IMR-90 (cell line): ENCODE measurements at regions of chr17 and their contacts with region 1.

Region 1: DNA sequence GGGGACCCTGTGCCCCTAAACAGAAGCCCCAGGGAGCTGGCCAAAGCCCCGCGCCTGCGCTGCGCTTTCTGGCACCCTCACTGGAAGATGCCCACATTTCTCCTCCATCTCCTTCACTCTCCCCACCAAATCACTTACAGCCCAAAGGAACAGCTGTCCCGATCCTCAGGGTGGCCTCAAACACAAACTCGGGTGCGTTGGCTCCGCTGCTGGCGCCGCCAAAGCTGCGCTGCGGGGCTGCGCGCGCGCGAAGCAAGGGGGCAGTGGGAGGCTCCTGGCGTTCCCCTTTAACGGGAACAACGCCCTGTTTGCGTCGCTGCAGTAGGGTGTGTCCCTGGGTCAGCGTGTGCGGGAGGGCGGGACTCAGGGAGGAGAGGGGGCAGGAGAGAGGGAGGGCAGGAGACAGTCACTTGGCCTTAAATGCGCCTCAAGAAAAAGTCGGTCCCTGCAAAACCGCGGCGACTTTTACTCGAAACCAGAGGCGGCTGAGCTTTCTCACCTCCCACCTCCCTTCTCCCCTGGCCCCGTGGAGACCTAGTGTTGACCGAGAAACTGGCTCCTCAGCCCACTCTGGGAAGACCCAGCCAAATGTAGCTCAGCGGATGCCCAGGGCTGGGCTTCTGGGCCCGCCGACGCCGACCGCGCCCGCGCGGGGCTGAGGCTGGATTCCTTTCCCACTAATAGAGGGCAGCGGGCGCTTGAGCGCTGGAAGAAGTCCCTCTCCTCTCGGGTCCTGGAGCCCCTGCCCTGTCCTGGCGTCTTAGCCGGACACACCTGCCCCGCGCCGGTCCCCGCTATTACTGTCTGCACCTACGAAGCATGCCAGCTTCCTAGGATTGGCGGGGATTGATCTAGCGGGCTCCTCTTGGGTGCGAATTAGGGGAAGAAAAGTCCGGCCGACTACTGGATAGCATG is 2.6 kb downstream of the PMP22 start:
- DNase-seq: peak; percentile 83
- ATAC-seq: peak; percentile 77
- H3K4me3 ChIP-seq: peak overlapping the region; percentile 76
- H3K27ac ChIP-seq: peak overlapping the region; percentile 88
- H3K4me1 ChIP-seq: peaks cover 5% of the 10 kb centered on the region
- H3K27me3 ChIP-seq: peaks cover 29% of the 10 kb centered on the region
- CTCF ChIP-seq: peak; percentile 32; the same call in 1 of the 2 replicates
- POLR2A ChIP-seq: peak; percentile 74
- RAD21 ChIP-seq: no peak

Region 2: DNA sequence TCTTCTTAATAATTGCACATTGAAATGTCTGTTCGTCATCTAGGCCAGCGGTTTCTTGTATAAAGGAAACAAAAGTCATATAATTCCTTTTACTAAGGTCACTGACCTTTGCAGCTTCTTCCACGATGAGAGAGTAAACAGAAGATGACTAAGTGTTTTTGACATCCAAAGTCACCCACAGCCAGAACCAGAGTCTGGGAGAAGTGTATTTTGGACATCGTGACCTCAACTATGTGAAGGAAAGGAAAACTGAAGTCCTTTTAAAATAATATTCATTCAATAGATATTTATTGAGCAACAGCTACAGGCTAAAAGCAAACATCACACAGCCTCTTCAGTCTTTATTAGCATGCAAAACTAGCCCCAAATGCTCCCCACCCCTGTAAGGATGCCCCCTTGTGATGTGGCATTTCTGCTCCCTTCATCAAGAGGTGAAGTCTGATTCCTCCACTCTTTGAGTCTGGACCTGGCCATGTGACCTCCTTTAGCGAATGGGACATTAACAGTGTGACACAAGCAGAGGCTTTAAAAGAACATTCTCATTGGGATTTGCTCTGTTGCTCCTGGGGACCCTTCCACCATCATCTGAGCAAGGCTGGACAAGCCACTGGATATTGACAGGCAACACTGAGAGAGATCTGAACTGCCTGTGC is 10.7 kb after region 1 on chr17:
- CTCF ChIA-PET with region 1: interaction called, 7 read pairs
- POLR2A ChIA-PET with region 1: no interaction called
- dilution Hi-C with region 1: no loop called
- in situ Hi-C with region 1: no loop called
- intact Hi-C with region 1: loop called (anchors 1 kb)
- DNase-seq: peak; percentile 98
- ATAC-seq: peak; percentile 90
- H3K4me3 ChIP-seq: no peak overlapping the region
- H3K27ac ChIP-seq: peak overlapping the region; percentile 85
- H3K4me1 ChIP-seq: peaks cover 27% of the 10 kb centered on the region
- H3K27me3 ChIP-seq: peaks cover 16% of the 10 kb centered on the region
- CTCF ChIP-seq: no peak
- POLR2A ChIP-seq: no peak
- RAD21 ChIP-seq: peak; percentile 12; the same call in 1 of the 2 replicates

Region 3: GRCh38 chr17:15307710-15308111 is 45.2 kb after region 1 on chr17:
- CTCF ChIA-PET with region 1: no interaction called
- POLR2A ChIA-PET with region 1: no interaction called
- dilution Hi-C with region 1: no loop called
- in situ Hi-C with region 1: no loop called
- intact Hi-C with region 1: loop called (anchors 1 kb)
- DNase-seq: peak; percentile 89
- ATAC-seq: peak; percentile 79
- H3K4me3 ChIP-seq: no peak overlapping the region
- H3K27ac ChIP-seq: peak overlapping the region; percentile 20; the same call in 1 of the 2 replicates
- H3K4me1 ChIP-seq: peaks cover 20% of the 10 kb centered on the region
- H3K27me3 ChIP-seq: peaks cover 8% of the 10 kb centered on the region
- CTCF ChIP-seq: no peak
- POLR2A ChIP-seq: no peak
- RAD21 ChIP-seq: no peak

Region 4: GRCh38 chr17:15377616-15378015 is 115.1 kb after region 1 on chr17:
- CTCF ChIA-PET with region 1: interaction called, 4 read pairs
- POLR2A ChIA-PET with region 1: interaction called, 3 read pairs
- dilution Hi-C with region 1: no loop called
- in situ Hi-C with region 1: no loop called
- intact Hi-C with region 1: loop called (anchors 2 kb)
- DNase-seq: peak; percentile 54
- ATAC-seq: peak; percentile 79
- H3K4me3 ChIP-seq: no peak overlapping the region
- H3K27ac ChIP-seq: peak overlapping the region; percentile 19; the same call in 1 of the 2 replicates
- H3K4me1 ChIP-seq: peaks cover 5% of the 10 kb centered on the region
- H3K27me3 ChIP-seq: peaks cover 3% of the 10 kb centered on the region; the same call in 1 of the 2 replicates
- CTCF ChIP-seq: no peak
- POLR2A ChIP-seq: no peak
- RAD21 ChIP-seq: no peak

Region 5: DNA sequence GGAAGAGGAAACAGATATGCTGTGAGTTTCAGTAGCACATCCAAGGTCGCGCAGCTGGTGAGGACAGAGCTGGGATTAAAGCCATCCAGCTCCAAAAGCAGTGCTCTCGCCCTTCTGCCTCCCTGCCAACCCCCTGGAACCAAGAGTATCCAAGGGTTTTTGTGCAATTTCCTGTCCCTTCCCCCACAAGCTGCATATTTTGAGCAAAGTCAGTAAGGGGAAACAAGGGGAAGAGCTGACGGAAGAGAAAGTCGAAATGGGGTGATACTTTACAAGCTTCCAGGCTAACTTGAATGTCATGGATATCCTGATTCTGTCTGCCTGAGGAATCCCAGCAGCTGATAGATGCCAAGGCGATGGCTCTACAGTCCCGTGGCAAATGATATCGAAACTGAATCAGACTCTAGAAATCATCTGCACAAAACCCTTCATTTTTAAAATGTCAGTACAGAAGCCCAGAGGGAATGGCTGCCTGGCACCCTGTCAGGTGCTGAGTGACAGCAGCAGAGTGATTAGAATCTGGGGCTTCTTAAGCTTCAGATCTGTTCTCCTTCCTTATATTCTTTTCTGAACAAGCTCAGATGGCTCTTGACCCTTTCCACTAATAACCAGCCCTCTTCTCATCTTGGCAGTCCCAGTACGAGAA is 121.7 kb after region 1 on chr17:
- CTCF ChIA-PET with region 1: interaction called, 3 read pairs
- POLR2A ChIA-PET with region 1: no interaction called
- dilution Hi-C with region 1: no loop called
- in situ Hi-C with region 1: no loop called
- intact Hi-C with region 1: loop called (anchors 2 kb)
- DNase-seq: peak; percentile 25
- ATAC-seq: peak; percentile 54
- H3K4me3 ChIP-seq: peak overlapping the region; percentile 35; the same call in 1 of the 2 replicates
- H3K27ac ChIP-seq: peak overlapping the region; percentile 82; the same call in 1 of the 2 replicates
- H3K4me1 ChIP-seq: peaks cover 7% of the 10 kb centered on the region
- H3K27me3 ChIP-seq: no peaks in the 10 kb centered on the region; the same call in 1 of the 2 replicates
- CTCF ChIP-seq: no peak
- POLR2A ChIP-seq: no peak
- RAD21 ChIP-seq: no peak

Region 6: GRCh38 chr17:15436473-15437302 is 174.1 kb after region 1 on chr17:
- CTCF ChIA-PET with region 1: no interaction called
- POLR2A ChIA-PET with region 1: no interaction called
- dilution Hi-C with region 1: no loop called
- in situ Hi-C with region 1: loop called (anchors 10 kb)
- intact Hi-C with region 1: loop called (anchors 1 kb)
- DNase-seq: peak; percentile 34
- ATAC-seq: no peak
- H3K4me3 ChIP-seq: no peak overlapping the region
- H3K27ac ChIP-seq: peak overlapping the region; percentile 6; the same call in 1 of the 2 replicates
- H3K4me1 ChIP-seq: peaks cover 23% of the 10 kb centered on the region
- H3K27me3 ChIP-seq: no peaks in the 10 kb centered on the region
- CTCF ChIP-seq: peak; percentile 30; the same call in 1 of the 2 replicates
- POLR2A ChIP-seq: no peak
- RAD21 ChIP-seq: no peak

Region 7: GRCh38 chr17:15502369-15503112 is 240.0 kb after region 1 on chr17:
- CTCF ChIA-PET with region 1: interaction called, 17 read pairs
- POLR2A ChIA-PET with region 1: interaction called, 4 read pairs
- dilution Hi-C with region 1: no loop called
- in situ Hi-C with region 1: loop called (anchors 5 kb)
- intact Hi-C with region 1: loop called (anchors 1 kb)
- DNase-seq: peak; percentile 93
- ATAC-seq: peak; percentile 99
- H3K4me3 ChIP-seq: no peak overlapping the region
- H3K27ac ChIP-seq: peak overlapping the region; percentile 47; the same call in 1 of the 2 replicates
- H3K4me1 ChIP-seq: peaks cover 7% of the 10 kb centered on the region; the same call in 1 of the 2 replicates
- H3K27me3 ChIP-seq: no peaks in the 10 kb centered on the region
- CTCF ChIP-seq: peak; percentile 97
- POLR2A ChIP-seq: peak; percentile 43; the same call in 1 of the 2 replicates
- RAD21 ChIP-seq: peak; percentile 97